ENCODE measurements at regions of chr11 and their contacts with region 1.

Region 1: GRCh38 chr11:61332797-61333549 is at the starts of genes DDB1 and TKFC:
- DNase-seq: peak; percentile 91 to 99 (median 97)
- ATAC-seq: peak; percentile 96
- H3K4me3 ChIP-seq: peak within 1 kb of the TSS; percentile 84
- H3K4me3 Mint-ChIP-seq: peak within 1 kb of the TSS; percentile 83 to 100 (median 95)
- H3K27ac ChIP-seq: peak within 1 kb of the TSS; percentile 99
- H3K27ac Mint-ChIP-seq: peak within 1 kb of the TSS; percentile 91 to 100 (median 98)
- H3K4me1 ChIP-seq: peaks cover 27 to 30% of the 10 kb centered on the region in 2 donors
- H3K4me1 Mint-ChIP-seq: peaks cover 33 to 67% (median 64%) of the 10 kb centered on the region in 7 donors
- H3K27me3 ChIP-seq: no peaks in the 10 kb centered on the region
- H3K27me3 Mint-ChIP-seq: no peaks in the 10 kb centered on the region
- total RNA-seq, gene DDB1: 153 to 213 (median 160) TPM
- total RNA-seq, gene TKFC: 36.9 to 59.9 (median 43.3) TPM

Region 2: DNA sequence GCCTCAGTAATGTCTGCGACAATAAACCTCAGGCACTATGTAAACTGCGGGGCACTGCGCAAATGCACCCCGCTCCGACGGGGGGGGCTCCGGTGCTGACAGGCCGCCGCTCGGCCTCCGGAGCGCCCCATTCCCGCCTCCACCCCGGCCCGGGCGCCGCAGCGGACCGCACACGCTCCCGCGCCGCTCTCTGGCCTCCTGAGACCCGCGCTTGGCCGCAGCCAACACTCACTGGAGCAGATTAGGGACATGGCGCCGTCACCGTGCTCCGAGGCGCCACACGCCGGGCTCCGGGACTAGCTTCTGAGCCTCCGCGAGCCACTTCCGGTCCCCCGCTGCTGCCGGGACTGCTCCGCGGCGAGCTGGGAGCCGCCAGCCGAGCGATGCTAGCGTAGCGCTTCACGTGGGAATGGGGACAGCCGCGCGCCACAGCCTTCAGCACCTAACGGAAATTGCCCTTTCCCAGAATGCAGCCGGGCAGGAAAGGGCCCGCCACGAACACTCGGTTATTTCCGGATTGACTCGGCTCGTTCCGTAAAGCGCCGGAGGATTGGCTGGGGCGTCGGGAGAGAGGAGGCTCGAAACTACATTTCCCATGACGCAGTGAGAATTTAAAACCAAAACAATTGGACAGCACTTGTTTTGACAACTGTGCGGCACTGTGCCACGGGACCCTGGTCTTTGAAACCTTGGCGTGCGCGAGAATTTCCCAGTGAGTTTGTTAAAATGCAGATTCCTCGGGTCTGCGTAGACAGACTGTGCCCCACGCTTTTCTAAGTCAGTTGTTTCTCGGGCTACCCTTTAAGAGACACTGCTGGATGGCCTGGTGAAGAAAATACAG is 426.6 kb before region 1 on chr11 and contains the start of gene PRPF19:
- CTCF ChIA-PET with region 1: no interaction called
- POLR2A ChIA-PET with region 1: interaction called, 3 read pairs
- intact Hi-C with region 1: loop called (anchors 2 to 5 kb)
- DNase-seq: peak; percentile 98 to 100 (median 99)
- ATAC-seq: peak; percentile 96
- H3K4me3 ChIP-seq: peak within 1 kb of the TSS; percentile 89
- H3K4me3 Mint-ChIP-seq: peak within 1 kb of the TSS; percentile 84 to 95 (median 91)
- H3K27ac ChIP-seq: peak within 1 kb of the TSS; percentile 88
- H3K27ac Mint-ChIP-seq: peak within 1 kb of the TSS; percentile 95 to 100 (median 98)
- H3K4me1 ChIP-seq: peaks cover 22 to 26% of the 10 kb centered on the region in 2 donors
- H3K4me1 Mint-ChIP-seq: peaks cover 34 to 69% (median 58%) of the 10 kb centered on the region in 7 donors
- H3K27me3 ChIP-seq: no peaks in the 10 kb centered on the region
- H3K27me3 Mint-ChIP-seq: peaks cover 0 to 11% (median 0%) of the 10 kb centered on the region in 5 donors
- total RNA-seq, gene PRPF19: 72.8 to 139 (median 85.6) TPM

Region 3: GRCh38 chr11:61091373-61092279 is 241.3 kb before region 1 on chr11:
- CTCF ChIA-PET with region 1: no interaction called
- POLR2A ChIA-PET with region 1: no interaction called
- intact Hi-C with region 1: no loop called
- DNase-seq: peak in 1 of 9 donors; percentile 74
- ATAC-seq: peak; percentile 34
- H3K4me3 ChIP-seq: peak overlapping the region; percentile 27
- H3K4me3 Mint-ChIP-seq: peak overlapping the region; percentile 41 to 90 (median 74)
- H3K27ac ChIP-seq: peak overlapping the region; percentile 79
- H3K27ac Mint-ChIP-seq: peak overlapping the region; percentile 86 to 98 (median 91)
- H3K4me1 ChIP-seq: peaks cover 10 to 27% of the 10 kb centered on the region in 2 donors
- H3K4me1 Mint-ChIP-seq: peaks cover 28 to 72% (median 49%) of the 10 kb centered on the region in 7 donors
- H3K27me3 ChIP-seq: no peaks in the 10 kb centered on the region
- H3K27me3 Mint-ChIP-seq: no peaks in the 10 kb centered on the region

Region 4: GRCh38 chr11:61161190-61162091 is 171.5 kb before region 1 on chr11 and contains the start of gene VPS37C:
- CTCF ChIA-PET with region 1: no interaction called
- POLR2A ChIA-PET with region 1: no interaction called
- intact Hi-C with region 1: loop called (anchors 1 to 2 kb)
- DNase-seq: peak; percentile 80 to 99 (median 87)
- ATAC-seq: peak; percentile 83
- H3K4me3 ChIP-seq: peak within 1 kb of the TSS; percentile 74
- H3K4me3 Mint-ChIP-seq: peak within 1 kb of the TSS; percentile 85 to 96 (median 90)
- H3K27ac ChIP-seq: peak within 1 kb of the TSS; percentile 78
- H3K27ac Mint-ChIP-seq: peak within 1 kb of the TSS; percentile 84 to 96 (median 94)
- H3K4me1 ChIP-seq: peaks cover 7 to 14% of the 10 kb centered on the region in 2 donors
- H3K4me1 Mint-ChIP-seq: peaks cover 31 to 62% (median 48%) of the 10 kb centered on the region in 7 donors
- H3K27me3 ChIP-seq: no peaks in the 10 kb centered on the region
- H3K27me3 Mint-ChIP-seq: no peaks in the 10 kb centered on the region
- total RNA-seq, gene VPS37C: 4.1 to 12.0 (median 7.9) TPM

Region 5: DNA sequence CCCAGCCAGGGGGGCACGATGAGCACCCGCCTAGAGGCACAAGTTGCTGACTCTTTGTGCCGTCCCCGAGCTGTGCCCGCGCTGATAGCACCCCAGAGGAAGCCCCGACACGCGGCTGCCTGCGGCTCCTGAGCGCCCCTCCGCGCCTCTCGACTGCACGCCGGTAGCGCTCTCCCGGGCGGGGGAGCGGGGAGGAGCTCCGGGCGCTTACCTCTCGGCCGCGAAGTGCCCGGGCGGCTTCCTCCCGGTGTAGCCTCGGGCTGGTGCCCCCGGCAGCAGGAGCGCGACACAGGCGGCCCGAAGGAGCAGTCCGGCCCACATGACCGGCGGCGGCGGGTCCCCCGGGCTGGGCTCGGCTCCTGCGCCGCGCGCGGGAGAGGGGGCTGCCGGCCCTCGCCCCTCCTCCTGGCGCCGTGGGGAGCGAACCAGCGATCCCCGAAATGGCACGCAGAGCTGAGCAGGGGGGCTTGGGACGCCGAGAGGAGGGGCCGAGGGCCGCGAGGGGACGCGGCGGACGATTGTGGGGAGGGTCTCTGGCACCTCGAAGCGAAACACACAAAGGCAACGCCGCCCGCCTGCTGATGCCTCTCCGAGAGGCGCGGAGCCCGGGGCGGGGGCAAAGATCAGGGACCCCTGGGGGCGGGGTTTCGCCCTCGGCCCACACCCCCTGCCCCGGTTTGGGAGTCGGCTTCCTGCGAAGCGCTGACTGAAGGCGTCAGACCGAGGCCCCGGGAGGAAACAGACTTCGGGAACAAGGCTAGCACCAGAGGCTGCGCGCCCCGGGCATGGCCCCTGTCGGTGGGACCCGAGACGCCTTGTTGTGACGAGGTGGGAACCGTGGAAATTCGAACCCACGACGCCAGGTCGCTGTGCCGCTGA is 38.0 kb before region 1 on chr11 and contains the start of gene VWCE:
- CTCF ChIA-PET with region 1: no interaction called
- POLR2A ChIA-PET with region 1: interaction called, 4 read pairs
- intact Hi-C with region 1: loop called in 1 of 2 experiments (anchors 5 kb)
- DNase-seq: peak; percentile 35 to 78 (median 57)
- ATAC-seq: peak; percentile 92
- H3K4me3 ChIP-seq: peak within 1 kb of the TSS; percentile 73
- H3K4me3 Mint-ChIP-seq: peak within 1 kb of the TSS; percentile 72 to 86 (median 80)
- H3K27ac ChIP-seq: no peak within 1 kb of the TSS
- H3K27ac Mint-ChIP-seq: peak within 1 kb of the TSS in 1 of 9 donors; percentile 46
- H3K4me1 ChIP-seq: no peaks in the 10 kb centered on the region
- H3K4me1 Mint-ChIP-seq: peaks cover 15 to 40% (median 39%) of the 10 kb centered on the region in 7 donors
- H3K27me3 ChIP-seq: no peaks in the 10 kb centered on the region
- H3K27me3 Mint-ChIP-seq: peaks cover 0 to 25% (median 9%) of the 10 kb centered on the region in 5 donors
- total RNA-seq, gene VWCE: 0.16 to 3.8 (median 0.49) TPM

Region 6: GRCh38 chr11:61384271-61385242 is 51.6 kb after region 1 on chr11:
- CTCF ChIA-PET with region 1: interaction called, 184 read pairs
- POLR2A ChIA-PET with region 1: interaction called, 70 read pairs
- intact Hi-C with region 1: loop called (anchors 1 kb)
- DNase-seq: no peak
- ATAC-seq: no peak
- H3K4me3 ChIP-seq: no peak overlapping the region
- H3K4me3 Mint-ChIP-seq: no peak overlapping the region
- H3K27ac ChIP-seq: no peak overlapping the region
- H3K27ac Mint-ChIP-seq: peak overlapping the region in 1 of 9 donors; percentile 30
- H3K4me1 ChIP-seq: no peaks in the 10 kb centered on the region
- H3K4me1 Mint-ChIP-seq: peaks cover 0 to 9% (median 7%) of the 10 kb centered on the region in 7 donors
- H3K27me3 ChIP-seq: no peaks in the 10 kb centered on the region
- H3K27me3 Mint-ChIP-seq: no peaks in the 10 kb centered on the region

Region 7: DNA sequence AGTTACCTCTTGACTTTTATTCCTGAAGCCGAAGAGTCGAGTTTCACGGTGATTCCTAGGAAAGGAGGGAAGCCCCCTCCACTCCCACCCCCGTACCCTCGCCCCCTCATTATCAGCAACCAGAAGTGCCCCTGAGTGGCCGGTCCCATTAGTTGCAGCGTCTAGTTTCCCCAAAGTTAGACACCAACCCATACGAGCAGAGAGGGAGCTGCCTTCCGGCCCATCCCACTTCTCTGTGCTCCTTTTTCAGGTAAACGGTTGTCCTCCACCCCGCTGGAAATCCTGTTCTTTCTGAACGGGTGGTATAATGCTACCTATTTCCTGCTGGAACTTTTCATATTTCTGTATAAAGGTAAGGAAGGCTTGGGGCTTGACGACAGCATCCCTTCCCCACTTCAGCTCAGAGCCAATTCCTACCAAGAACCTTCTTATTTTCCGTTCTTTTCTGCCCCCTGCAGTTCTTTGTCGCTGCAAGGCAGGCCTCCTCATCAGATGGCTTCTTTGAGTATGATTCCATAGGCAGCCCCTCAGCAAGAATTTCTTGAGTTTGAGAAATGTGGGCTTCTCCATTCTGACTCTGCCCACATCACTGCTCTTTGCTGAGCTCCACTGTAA is 60.1 kb after region 1 on chr11:
- CTCF ChIA-PET with region 1: interaction called, 54 read pairs
- POLR2A ChIA-PET with region 1: interaction called, 70 read pairs
- intact Hi-C with region 1: loop called (anchors 1 kb)
- DNase-seq: peak in 7 of 9 donors; percentile 23 to 45 (median 37)
- ATAC-seq: peak; percentile 59
- H3K4me3 ChIP-seq: peak overlapping the region; percentile 84
- H3K4me3 Mint-ChIP-seq: peak overlapping the region; percentile 90 to 99 (median 94)
- H3K27ac ChIP-seq: peak overlapping the region; percentile 87
- H3K27ac Mint-ChIP-seq: peak overlapping the region; percentile 93 to 98 (median 97)
- H3K4me1 ChIP-seq: peaks cover 9 to 10% of the 10 kb centered on the region in 2 donors
- H3K4me1 Mint-ChIP-seq: peaks cover 9 to 25% (median 21%) of the 10 kb centered on the region in 7 donors
- H3K27me3 ChIP-seq: no peaks in the 10 kb centered on the region
- H3K27me3 Mint-ChIP-seq: no peaks in the 10 kb centered on the region